Colonic mucosa (tissue), 4 donors: ENCODE measurements at regions of chrX and their contacts with region 1.

Region 1: GRCh38 chrX:132740316-132741123 is 217.9 kb downstream of the HS6ST2 start:
- DNase-seq: no peak
- H3K4me3 ChIP-seq: no peak overlapping the region
- H3K27ac ChIP-seq: no peak overlapping the region
- H3K4me1 ChIP-seq: no peaks in the 10 kb centered on the region
- H3K27me3 ChIP-seq: no peaks in the 10 kb centered on the region
- CTCF ChIP-seq: peak; percentile 60

Region 2: DNA sequence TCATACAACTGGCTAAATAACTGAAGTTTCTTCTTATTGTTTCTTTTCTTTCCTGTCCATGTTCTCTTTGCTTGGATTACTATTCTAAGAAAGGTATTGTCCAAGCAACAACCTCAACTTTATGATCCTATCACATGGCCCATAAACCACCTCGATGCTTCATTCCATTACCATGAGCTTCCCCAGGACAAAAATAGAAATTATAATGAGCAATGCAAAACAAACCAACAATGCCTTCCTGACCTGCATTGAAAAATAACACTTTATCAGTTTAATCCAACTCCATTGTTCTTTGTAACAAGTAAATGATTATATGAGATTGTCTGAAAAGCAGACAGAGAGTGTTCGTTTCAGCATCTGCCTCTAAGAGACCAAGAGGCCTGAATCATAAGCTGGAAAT is 69.1 kb after region 1 on chrX:
- intact Hi-C with region 1: no loop called
- DNase-seq: no peak
- H3K4me3 ChIP-seq: no peak overlapping the region
- H3K27ac ChIP-seq: no peak overlapping the region
- H3K4me1 ChIP-seq: no peaks in the 10 kb centered on the region
- H3K27me3 ChIP-seq: no peaks in the 10 kb centered on the region
- CTCF ChIP-seq: no peak

Region 3: DNA sequence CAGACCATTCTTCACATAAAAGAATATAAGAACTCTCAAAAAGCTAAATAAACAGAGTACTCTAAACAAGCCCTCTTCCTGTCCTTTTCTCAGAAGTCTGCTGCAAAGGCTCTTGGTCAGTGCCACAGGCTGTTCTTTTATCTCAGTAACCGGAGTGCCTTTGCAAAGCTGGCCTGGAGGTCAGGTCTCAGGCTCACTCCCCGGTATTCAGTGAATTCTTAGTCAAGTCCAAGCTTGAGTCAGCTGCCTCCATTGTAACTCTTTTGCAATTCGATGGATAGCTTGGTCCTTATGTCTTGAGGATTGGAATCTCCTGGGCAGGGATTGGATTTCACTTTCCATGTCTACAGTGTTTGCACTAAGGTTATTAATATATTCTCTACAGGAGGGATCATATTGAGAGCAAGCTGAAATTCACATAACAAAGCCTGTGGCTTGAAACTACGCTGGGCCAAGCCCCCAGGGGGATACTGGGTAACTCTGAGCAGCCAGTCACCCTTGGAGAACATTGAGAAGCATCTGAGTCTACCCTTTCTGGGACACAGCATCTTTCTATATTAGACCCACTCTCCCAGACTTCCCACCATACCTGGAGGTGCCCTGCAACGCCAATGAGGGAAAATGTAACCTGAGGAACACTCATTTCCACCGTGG is 227.9 kb after region 1 on chrX:
- intact Hi-C with region 1: loop called (anchors 10 kb)
- DNase-seq: no peak
- H3K4me3 ChIP-seq: no peak overlapping the region
- H3K27ac ChIP-seq: no peak overlapping the region
- H3K4me1 ChIP-seq: no peaks in the 10 kb centered on the region
- H3K27me3 ChIP-seq: peaks cover 4% of the 10 kb centered on the region
- CTCF ChIP-seq: no peak

Region 4: GRCh38 chrX:133033010-133033409 is 292.5 kb after region 1 on chrX:
- intact Hi-C with region 1: no loop called
- DNase-seq: no peak
- H3K4me3 ChIP-seq: no peak overlapping the region
- H3K27ac ChIP-seq: no peak overlapping the region
- H3K4me1 ChIP-seq: no peaks in the 10 kb centered on the region
- H3K27me3 ChIP-seq: peaks cover 4% of the 10 kb centered on the region
- CTCF ChIP-seq: no peak